Calu3 (cell line): ENCODE measurements at regions of chr1 and their contacts with region 1.

Region 1: DNA sequence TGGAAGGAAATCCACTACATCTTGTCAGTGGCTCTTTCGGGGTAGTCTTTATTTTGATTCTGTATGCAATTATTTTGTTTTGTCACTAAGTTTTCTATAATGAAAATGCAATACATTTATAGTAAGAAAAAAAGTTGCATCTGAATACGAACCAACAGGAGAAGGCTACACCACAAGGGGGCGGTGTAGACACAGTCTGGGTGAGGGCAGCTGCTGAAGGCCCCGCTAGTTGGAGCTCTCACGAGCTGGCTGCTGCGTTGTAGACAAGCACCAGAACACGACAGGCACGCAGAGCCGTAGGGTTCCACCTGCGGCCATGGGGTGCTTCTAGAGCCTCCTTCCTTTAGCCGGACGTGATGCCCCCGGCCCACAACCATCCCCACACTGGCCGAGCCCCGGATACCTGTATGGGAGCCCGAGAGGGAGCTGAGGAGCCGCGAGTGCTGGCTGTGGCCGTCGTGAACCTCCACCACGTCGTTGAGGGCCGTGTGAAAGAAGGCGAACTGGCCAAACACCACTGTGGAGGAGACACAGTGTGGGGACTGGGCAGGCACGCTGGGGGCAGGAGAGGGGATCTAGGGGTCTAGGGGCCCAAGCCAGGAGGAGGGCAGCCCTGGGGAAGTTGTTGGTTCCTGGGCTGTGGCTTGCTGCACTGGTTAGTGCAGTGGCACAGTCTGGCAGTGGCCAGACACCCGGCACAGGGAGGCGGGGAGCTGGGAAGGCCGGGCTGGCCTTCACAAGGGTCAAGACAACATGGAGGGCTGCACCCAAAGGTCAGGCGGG is 160.8 kb downstream of the ZSCAN20 start:
- DNase-seq: peak; percentile 93
- H3K4me3 Mint-ChIP-seq: peak overlapping the region; percentile 38
- H3K27ac Mint-ChIP-seq: no peak overlapping the region
- H3K4me1 Mint-ChIP-seq: no peaks in the 10 kb centered on the region
- H3K27me3 Mint-ChIP-seq: peaks cover 84% of the 10 kb centered on the region
- CTCF ChIP-seq: peak; percentile 92

Region 2: GRCh38 chr1:33930346-33931110 is 297.3 kb after region 1 on chr1:
- CTCF ChIA-PET with region 1: no interaction called
- intact Hi-C with region 1: no loop called
- DNase-seq: no peak
- H3K4me3 Mint-ChIP-seq: no peak overlapping the region
- H3K27ac Mint-ChIP-seq: no peak overlapping the region
- H3K4me1 Mint-ChIP-seq: no peaks in the 10 kb centered on the region
- H3K27me3 Mint-ChIP-seq: peaks cover 16% of the 10 kb centered on the region
- CTCF ChIP-seq: no peak

Region 3: GRCh38 chr1:34162852-34163766 is 529.9 kb after region 1 on chr1:
- CTCF ChIA-PET with region 1: interaction called, 11 read pairs
- intact Hi-C with region 1: loop called (anchors 1 kb)
- DNase-seq: peak; percentile 77
- H3K4me3 Mint-ChIP-seq: peak overlapping the region; percentile 61
- H3K27ac Mint-ChIP-seq: no peak overlapping the region
- H3K4me1 Mint-ChIP-seq: no peaks in the 10 kb centered on the region
- H3K27me3 Mint-ChIP-seq: peaks cover 90% of the 10 kb centered on the region
- CTCF ChIP-seq: no peak